Body of pancreas (tissue), 4 donors: ENCODE measurements at regions of chr15 and their contacts with region 1.

Region 1: GRCh38 chr15:63504247-63504978 is at the start of gene USP3:
- DNase-seq: peak; percentile 94 to 96 (median 96)
- ATAC-seq: peak; percentile 79
- H3K4me3 ChIP-seq: peak within 1 kb of the TSS; percentile 71 to 72
- H3K27ac ChIP-seq: peak within 1 kb of the TSS; percentile 97 to 99 (median 98)
- H3K4me1 ChIP-seq: peaks cover 72% of the 10 kb centered on the region
- H3K27me3 ChIP-seq: no peaks in the 10 kb centered on the region
- CTCF ChIP-seq: peak in 5 of 7 experiments; percentile 23 to 38 (median 30)
- POLR2A ChIP-seq: peak; percentile 88 to 97 (median 96)
- total RNA-seq, gene USP3: 48.8 to 50.1 TPM

Region 2: DNA sequence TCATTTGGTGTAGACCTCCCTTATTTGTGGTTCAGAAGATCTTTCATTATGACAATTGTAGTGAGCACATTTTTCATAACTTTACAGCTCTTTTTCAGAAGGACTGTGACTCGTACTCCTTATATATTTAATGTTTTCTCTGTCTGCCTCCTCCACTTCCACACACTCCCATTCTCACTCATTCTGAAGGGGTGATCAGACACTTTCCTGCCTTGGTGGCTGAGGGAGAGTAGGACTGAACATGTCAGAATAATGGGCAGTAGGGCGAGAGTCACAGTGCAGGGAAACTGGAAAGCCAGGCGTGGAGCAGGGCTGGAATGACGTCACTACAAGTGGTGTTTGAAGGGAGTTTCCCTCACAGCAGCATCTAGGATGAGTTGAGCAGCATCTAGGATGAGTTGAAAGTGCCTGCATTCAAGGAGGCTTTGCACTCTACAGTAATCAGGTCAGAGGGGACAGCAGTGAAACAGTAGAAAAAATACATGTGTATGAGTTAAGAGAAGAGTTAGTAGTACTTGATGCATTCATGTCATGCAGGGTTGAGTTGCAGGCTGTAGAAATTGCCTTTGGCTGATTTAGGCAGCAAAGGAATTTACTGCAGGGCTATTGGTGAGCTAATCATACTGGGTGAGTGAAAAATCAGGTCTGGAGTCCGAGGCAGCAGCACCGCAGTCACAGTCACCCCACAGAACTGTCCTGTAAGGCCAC is 56.5 kb after region 1 on chr15:
- intact Hi-C with region 1: loop called (anchors 10 kb)
- DNase-seq: no peak
- ATAC-seq: no peak
- H3K4me3 ChIP-seq: no peak overlapping the region
- H3K27ac ChIP-seq: no peak overlapping the region
- H3K4me1 ChIP-seq: peaks cover 7% of the 10 kb centered on the region
- H3K27me3 ChIP-seq: no peaks in the 10 kb centered on the region
- CTCF ChIP-seq: no peak
- POLR2A ChIP-seq: no peak